A549 (cell line): ENCODE measurements at regions of chr22 and their contacts with region 1.

Region 1: GRCh38 chr22:27880778-27881394 is 38.2 kb downstream of the PITPNB start:
- DNase-seq: peak; percentile 17 to 52
- ATAC-seq: peak; percentile 81 to 89
- H3K4me3 ChIP-seq: no peak overlapping the region
- H3K27ac ChIP-seq: peak overlapping the region; percentile 11 to 39; a peak in 1 of 6 replicates
- H3K4me1 ChIP-seq: peaks cover 8% of the 10 kb centered on the region; the same call in 2 of the 3 replicates
- CTCF ChIP-seq: peak; percentile 59
- EP300 ChIP-seq: no peak
- POLR2A ChIP-seq: no peak
- RAD21 ChIP-seq: peak; percentile 45 to 60; a peak in 4 of 5 replicates

Region 2: DNA sequence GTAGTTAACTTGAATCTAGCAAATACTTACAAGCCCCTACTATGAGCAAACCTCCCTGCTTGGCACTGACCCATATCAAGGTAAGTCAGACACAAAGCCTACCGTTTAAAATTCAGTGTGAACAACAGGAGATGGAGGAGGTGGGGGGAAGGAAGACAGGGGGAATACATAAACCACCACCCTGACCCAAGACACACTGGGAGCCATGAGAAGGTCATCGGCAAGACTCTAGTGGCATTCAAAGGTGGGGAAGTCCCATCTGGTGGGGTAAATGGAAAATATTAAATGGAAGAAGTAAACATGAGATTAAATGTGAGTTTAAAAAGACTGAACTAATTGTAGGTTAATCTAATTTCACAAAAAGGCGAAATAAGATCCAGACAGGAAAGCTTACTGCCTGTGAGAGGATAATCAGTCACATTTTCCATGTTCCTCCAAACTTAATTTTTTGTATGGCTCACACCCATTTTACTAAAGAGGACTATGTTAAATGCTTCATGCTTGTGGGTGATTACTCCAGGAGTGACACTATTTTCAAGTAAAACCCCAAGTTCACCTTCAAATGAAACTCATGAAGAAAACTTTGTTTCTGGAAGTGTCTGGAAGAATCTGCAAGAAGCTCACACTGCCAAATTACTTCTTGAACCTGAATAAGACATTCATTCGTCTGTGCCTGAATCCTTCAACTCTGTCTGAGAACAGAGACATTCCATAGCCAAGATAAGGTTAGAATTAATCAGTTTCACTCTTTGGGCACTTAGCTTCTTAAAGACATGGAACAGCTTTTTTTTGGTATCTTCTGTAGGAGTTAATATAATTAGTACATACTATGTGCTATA is 13.6 kb before region 1 on chr22:
- CTCF ChIA-PET with region 1: interaction called, 18 read pairs
- POLR2A ChIA-PET with region 1: no interaction called
- DNase-seq: peak in 1 of 2 experiments; percentile 31
- ATAC-seq: peak in 1 of 2 experiments; percentile 40; a peak in 3 of 6 replicates
- H3K4me3 ChIP-seq: 0 out of 3 replicates have a peak overlapping the region, but pooled peaks have one; percentile 6
- H3K27ac ChIP-seq: peak overlapping the region; percentile 65 to 71; a peak in 5 of 6 replicates
- H3K4me1 ChIP-seq: peaks cover 76% of the 10 kb centered on the region
- CTCF ChIP-seq: no peak
- EP300 ChIP-seq: no peak
- POLR2A ChIP-seq: no peak
- RAD21 ChIP-seq: no peak

Region 3: GRCh38 chr22:27895600-27895999 is 14.7 kb after region 1 on chr22:
- CTCF ChIA-PET with region 1: interaction called, 29 read pairs
- POLR2A ChIA-PET with region 1: no interaction called
- DNase-seq: no peak
- ATAC-seq: no peak
- H3K4me3 ChIP-seq: no peak overlapping the region
- H3K27ac ChIP-seq: no peak overlapping the region
- H3K4me1 ChIP-seq: no peaks in the 10 kb centered on the region
- CTCF ChIP-seq: no peak
- EP300 ChIP-seq: no peak
- POLR2A ChIP-seq: no peak
- RAD21 ChIP-seq: no peak